Right ventricle myocardium inferior (tissue), 1 donor: ENCODE measurements at regions of chr9 and their contacts with region 1.

Region 1: DNA sequence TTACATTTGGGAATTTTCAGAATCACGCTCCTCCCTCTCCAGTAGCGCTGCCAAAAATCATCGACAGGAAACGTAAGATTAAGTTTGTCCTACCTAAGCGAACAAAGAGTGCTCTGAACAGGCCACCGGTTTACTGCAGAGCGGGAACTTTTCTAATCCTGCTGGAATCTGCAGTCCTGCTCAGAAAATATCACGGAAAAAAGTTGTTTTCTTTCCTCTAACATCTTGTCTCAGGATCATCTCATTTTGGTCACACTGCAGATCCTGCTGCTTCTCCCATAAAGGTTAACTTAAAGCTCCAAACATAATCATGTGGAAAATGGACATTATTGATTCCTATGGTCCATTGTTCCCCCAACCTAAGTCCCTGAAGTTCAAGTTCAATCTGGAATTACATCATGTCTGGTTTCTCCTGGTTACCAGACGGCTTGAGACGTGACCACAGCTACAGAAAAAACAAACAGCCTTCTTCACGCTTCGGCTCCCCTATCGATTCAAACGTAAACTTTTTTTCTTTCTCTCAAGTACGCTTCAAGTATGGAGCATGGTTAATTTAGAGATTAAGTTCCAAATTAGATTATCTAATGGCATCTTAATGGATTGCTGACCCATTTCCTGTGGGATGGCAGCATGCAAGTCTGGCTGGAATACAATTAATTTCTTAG is 217.6 kb downstream of the NFIB start:
- DNase-seq: no peak
- ATAC-seq: peak; percentile 75

Region 2: GRCh38 chr9:13588151-13589033 is 508.0 kb before region 1 on chr9:
- intact Hi-C with region 1: loop called (anchors 10 kb)
- DNase-seq: no peak
- ATAC-seq: peak; percentile 74

Region 3: DNA sequence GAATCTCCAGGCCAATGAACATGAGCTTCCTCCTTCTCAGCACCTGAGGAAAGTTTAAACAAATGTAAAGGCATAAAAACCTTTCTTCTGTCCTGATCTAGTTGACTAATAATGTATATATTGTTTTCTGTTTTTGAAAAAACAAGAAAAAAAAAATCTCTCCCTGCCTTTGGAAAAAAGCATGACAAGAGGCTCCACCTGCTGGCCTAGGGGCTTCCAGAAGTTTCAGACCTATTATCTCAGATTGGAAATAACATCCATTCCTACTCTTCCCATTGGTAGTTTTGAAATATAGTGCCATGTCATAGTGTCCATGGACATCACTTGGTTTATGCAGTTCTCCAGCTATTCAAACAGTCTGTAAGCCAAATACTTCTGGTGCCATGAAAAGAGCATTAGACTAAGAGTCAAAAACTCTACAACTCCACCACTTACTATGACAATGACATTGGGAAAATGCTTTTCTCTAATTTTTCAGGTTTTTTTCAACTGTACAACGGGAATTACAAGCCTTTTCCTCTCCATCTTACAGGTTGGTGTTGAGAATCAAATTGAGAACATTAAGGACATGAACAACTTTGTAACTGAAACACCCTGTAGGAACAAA is 407.3 kb before region 1 on chr9:
- intact Hi-C with region 1: loop called (anchors 10 kb)
- DNase-seq: no peak
- ATAC-seq: no peak

Region 4: GRCh38 chr9:13787234-13787833 is 309.1 kb before region 1 on chr9:
- intact Hi-C with region 1: loop called (anchors 10 kb)
- DNase-seq: no peak
- ATAC-seq: peak; percentile 82

Region 5: GRCh38 chr9:13898957-13899356 is 197.4 kb before region 1 on chr9:
- intact Hi-C with region 1: loop called (anchors 5 kb)
- DNase-seq: no peak
- ATAC-seq: no peak

Region 6: GRCh38 chr9:14043481-14043880 is 52.9 kb before region 1 on chr9:
- intact Hi-C with region 1: no loop called
- DNase-seq: no peak
- ATAC-seq: no peak